K562 (cell line): ENCODE measurements at regions of chr2 and their contacts with region 1.

Region 1: GRCh38 chr2:20578895-20579825 is 71.7 kb downstream of the HS1BP3 start:
- DNase-seq: peak; percentile 86 to 93 (median 88)
- ATAC-seq: peak; percentile 89
- H3K4me3 ChIP-seq: no peak overlapping the region
- H3K27ac ChIP-seq: peak overlapping the region; percentile 97
- H3K4me1 ChIP-seq: peaks cover 35 to 44% of the 10 kb centered on the region in 2 experiments
- H3K27me3 ChIP-seq: no peaks in the 10 kb centered on the region
- CTCF ChIP-seq: no peak
- EP300 ChIP-seq: peak; percentile 84
- POLR2A ChIP-seq: peak; percentile 39; the same call in 1 of the 2 replicates
- RAD21 ChIP-seq: peak in 1 of 2 experiments; percentile 11; a peak in 2 of 4 replicates

Region 2: GRCh38 chr2:20595431-20596192 is 16.5 kb after region 1 on chr2:
- CTCF ChIA-PET with region 1: no interaction called
- POLR2A ChIA-PET with region 1: interaction called, 11 read pairs
- in situ Hi-C with region 1: no loop called
- intact Hi-C with region 1: loop called (anchors 2 kb)
- DNase-seq: peak in 2 of 4 experiments; percentile 59 to 76
- ATAC-seq: peak; percentile 69
- H3K4me3 ChIP-seq: no peak overlapping the region
- H3K27ac ChIP-seq: peak overlapping the region; percentile 81
- H3K4me1 ChIP-seq: peaks cover 45 to 61% of the 10 kb centered on the region in 2 experiments
- H3K27me3 ChIP-seq: no peaks in the 10 kb centered on the region
- CTCF ChIP-seq: no peak; a peak in 1 of 6 replicates
- EP300 ChIP-seq: peak; percentile 16; the same call in 1 of the 2 replicates
- POLR2A ChIP-seq: 0 out of 2 replicates have a peak, but pooled peaks have one; percentile 22
- RAD21 ChIP-seq: no peak; a peak in 1 of 4 replicates

Region 3: DNA sequence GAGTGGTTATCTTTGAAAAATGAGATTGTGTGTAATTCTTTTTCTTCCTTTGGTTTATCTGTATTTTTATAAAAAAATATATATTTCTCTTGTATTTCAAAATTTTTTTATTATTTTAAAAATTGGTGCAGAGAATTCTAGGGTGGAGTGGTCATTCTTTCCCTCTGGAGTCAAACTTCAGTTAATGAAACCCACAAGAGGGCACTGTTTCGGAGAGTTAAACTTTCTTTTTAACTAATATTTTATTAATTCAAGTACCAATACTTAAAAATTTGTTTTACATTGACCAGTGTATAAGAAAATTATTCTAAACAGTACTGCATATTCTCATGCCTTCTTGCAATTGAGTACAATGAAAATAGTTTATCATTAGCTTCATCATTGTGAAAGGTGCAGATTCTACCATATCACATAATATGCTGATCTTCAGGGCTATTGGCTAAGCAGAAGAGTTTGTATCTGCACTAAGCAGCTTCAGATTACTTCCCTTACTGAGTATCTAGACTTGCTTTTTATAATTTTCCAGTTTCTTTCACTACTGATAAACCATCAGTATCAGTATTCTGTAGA is 21.7 kb after region 1 on chr2:
- CTCF ChIA-PET with region 1: no interaction called
- POLR2A ChIA-PET with region 1: interaction called, 11 read pairs
- in situ Hi-C with region 1: no loop called
- intact Hi-C with region 1: loop called (anchors 2 kb)
- DNase-seq: no peak
- ATAC-seq: no peak; the same call in 2 of the 3 replicates
- H3K4me3 ChIP-seq: no peak overlapping the region
- H3K27ac ChIP-seq: peak overlapping the region; percentile 66; the same call in 2 of the 3 replicates
- H3K4me1 ChIP-seq: peaks cover 11 to 29% of the 10 kb centered on the region in 2 experiments
- H3K27me3 ChIP-seq: no peaks in the 10 kb centered on the region
- CTCF ChIP-seq: peak in 2 of 3 experiments; percentile 27 to 45; a peak in 3 of 6 replicates
- EP300 ChIP-seq: no peak
- POLR2A ChIP-seq: no peak
- RAD21 ChIP-seq: peak; percentile 11 to 35; a peak in 2 of 4 replicates